Left lung (tissue), 14 donors: ENCODE measurements at regions of chr3 and their contacts with region 1.

Region 1: DNA sequence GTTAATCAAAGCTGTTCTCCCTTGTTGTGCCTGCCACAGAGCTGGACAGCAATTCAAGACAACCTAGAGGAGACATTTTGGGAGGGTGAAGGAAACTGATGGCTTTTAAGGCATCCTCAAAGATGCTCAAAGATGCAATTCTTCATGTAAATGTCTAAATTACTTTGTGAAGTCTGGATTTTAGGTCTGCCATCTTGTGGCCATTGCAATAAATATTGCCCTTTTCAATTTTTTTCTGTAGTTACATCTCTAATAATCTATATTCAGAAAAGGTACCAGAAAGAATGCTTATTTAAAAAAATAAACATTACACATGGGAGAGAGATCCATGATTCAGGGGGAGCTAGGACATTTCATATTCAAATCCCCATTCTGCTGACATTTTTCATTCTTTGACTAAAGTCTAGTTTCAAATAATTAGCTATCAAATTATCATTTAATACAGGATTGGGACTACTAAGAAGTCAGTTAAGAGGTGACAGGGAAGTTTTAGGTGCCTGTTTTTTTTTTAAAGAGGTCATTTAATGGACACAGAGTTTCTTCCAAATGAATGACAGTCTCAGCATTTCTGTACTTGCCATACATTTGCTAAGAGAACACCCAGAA is 259.8 kb upstream of the WNT5A start:
- DNase-seq: no peak
- ATAC-seq: no peak
- H3K4me3 ChIP-seq: no peak overlapping the region
- H3K27ac ChIP-seq: no peak overlapping the region
- H3K4me1 ChIP-seq: no peaks in the 10 kb centered on the region
- H3K27me3 ChIP-seq: no peaks in the 10 kb centered on the region
- CTCF ChIP-seq: peak in 1 of 2 donors; percentile 35

Region 2: GRCh38 chr3:55485211-55485791 is 261.6 kb before region 1 on chr3:
- intact Hi-C with region 1: loop called in 1 of 2 experiments (anchors 10 kb)
- DNase-seq: peak; percentile 75 to 90 (median 82)
- ATAC-seq: peak; percentile 80
- H3K4me3 ChIP-seq: peak overlapping the region; percentile 58 to 66
- H3K27ac ChIP-seq: peak overlapping the region; percentile 65 to 72
- H3K4me1 ChIP-seq: peaks cover 8 to 18% of the 10 kb centered on the region in 2 donors
- H3K27me3 ChIP-seq: peaks cover 18 to 100% of the 10 kb centered on the region in 2 donors
- CTCF ChIP-seq: peak; percentile 70 to 78

Region 3: DNA sequence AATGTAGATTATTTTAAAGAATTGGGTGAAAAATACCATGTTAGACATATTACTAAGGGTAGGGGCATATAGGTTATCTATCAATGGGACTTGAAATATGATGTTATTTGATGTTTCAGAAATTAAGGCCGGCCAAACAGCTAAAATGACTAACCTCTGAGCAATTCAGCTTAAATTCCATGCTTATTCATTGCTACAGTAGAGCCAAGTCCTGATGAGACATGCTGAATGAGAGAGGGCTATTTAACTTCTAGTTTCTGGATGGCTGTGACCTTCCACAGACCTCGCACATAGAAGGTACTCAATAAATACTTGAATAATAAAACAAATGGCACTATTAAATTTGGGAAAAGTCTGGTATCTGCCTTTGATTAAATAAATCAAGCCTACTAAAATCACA is 84.2 kb before region 1 on chr3:
- intact Hi-C with region 1: no loop called
- DNase-seq: no peak
- ATAC-seq: no peak
- H3K4me3 ChIP-seq: no peak overlapping the region
- H3K27ac ChIP-seq: no peak overlapping the region
- H3K4me1 ChIP-seq: no peaks in the 10 kb centered on the region
- H3K27me3 ChIP-seq: no peaks in the 10 kb centered on the region
- CTCF ChIP-seq: no peak